Endothelial cell of umbilical vein (primary cell): ENCODE measurements at regions of chr1 and their contacts with region 1.

Region 1: GRCh38 chr1:151254217-151255213 is at the start of gene PSMD4:
- DNase-seq: peak; percentile 98
- H3K4me3 ChIP-seq: peak within 1 kb of the TSS; percentile 82 to 96 (median 87)
- H3K27ac ChIP-seq: peak within 1 kb of the TSS; percentile 80
- H3K4me1 ChIP-seq: peaks cover 7% of the 10 kb centered on the region
- H3K27me3 ChIP-seq: no peaks in the 10 kb centered on the region
- CTCF ChIP-seq: no peak
- POLR2A ChIP-seq: peak; percentile 96
- total RNA-seq, gene PSMD4: 181 and 184 TPM in 2 replicates

Region 2: GRCh38 chr1:151189638-151190445 is 64.7 kb before region 1 on chr1 and contains the start of gene VPS72:
- CTCF ChIA-PET with region 1: interaction called, 45 read pairs
- POLR2A ChIA-PET with region 1: no interaction called
- dilution Hi-C with region 1: no loop called
- intact Hi-C with region 1: no loop called
- DNase-seq: peak; percentile 91
- H3K4me3 ChIP-seq: peak within 1 kb of the TSS; percentile 63 to 97 (median 93)
- H3K27ac ChIP-seq: peak within 1 kb of the TSS; percentile 56
- H3K4me1 ChIP-seq: peaks cover 10% of the 10 kb centered on the region
- H3K27me3 ChIP-seq: no peaks in the 10 kb centered on the region
- CTCF ChIP-seq: no peak
- POLR2A ChIP-seq: peak; percentile 92
- total RNA-seq, gene VPS72: 83.1 and 85.2 TPM in 2 replicates

Region 3: DNA sequence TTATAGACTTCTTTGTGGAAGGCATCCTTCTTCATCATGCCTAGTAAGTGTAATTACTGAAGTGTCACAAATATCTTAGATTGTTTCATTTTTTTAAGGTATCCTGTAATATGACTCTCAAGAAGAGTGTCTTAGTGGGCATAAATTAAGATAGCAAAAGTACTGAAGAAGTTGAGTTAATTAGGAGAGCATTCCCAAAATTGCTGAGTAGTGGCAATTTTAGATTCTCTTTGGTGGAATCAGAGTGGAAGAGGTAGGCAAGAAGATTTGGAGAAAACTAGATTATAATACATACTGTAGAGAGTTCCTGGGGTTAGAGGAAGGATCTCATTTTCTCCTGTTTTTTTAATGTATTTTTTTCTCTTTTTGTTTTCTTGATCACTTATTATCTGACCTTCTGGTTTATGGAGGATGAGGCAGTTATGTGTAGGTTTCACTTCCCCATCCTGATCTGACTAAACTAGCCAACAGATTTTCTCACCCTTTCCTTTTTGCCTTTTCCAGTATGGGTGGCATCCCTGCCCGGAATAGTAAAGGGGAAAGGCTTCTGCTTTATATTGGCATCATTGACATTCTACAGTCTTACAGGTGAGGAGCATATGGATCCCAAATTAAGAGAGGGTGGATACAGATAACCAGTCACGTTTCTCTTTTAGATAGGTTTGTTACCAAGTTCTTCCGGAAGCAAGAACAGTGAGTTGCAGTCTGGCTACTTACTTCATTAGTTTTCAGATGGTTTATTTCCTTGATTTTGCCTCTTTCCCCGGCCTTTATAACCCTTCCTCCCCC is 16.6 kb before region 1 on chr1:
- CTCF ChIA-PET with region 1: interaction called, 17 read pairs
- POLR2A ChIA-PET with region 1: no interaction called
- dilution Hi-C with region 1: no loop called
- intact Hi-C with region 1: no loop called
- DNase-seq: peak; percentile 10
- H3K4me3 ChIP-seq: no peak overlapping the region
- H3K27ac ChIP-seq: no peak overlapping the region
- H3K4me1 ChIP-seq: no peaks in the 10 kb centered on the region
- H3K27me3 ChIP-seq: no peaks in the 10 kb centered on the region
- CTCF ChIP-seq: no peak
- POLR2A ChIP-seq: no peak

Region 4: GRCh38 chr1:151243683-151244216 is 10.8 kb before region 1 on chr1:
- CTCF ChIA-PET with region 1: interaction called, 10 read pairs
- POLR2A ChIA-PET with region 1: no interaction called
- dilution Hi-C with region 1: no loop called
- intact Hi-C with region 1: no loop called
- DNase-seq: no peak
- H3K4me3 ChIP-seq: no peak overlapping the region
- H3K27ac ChIP-seq: no peak overlapping the region
- H3K4me1 ChIP-seq: no peaks in the 10 kb centered on the region
- H3K27me3 ChIP-seq: no peaks in the 10 kb centered on the region
- CTCF ChIP-seq: no peak
- POLR2A ChIP-seq: no peak

Region 5: DNA sequence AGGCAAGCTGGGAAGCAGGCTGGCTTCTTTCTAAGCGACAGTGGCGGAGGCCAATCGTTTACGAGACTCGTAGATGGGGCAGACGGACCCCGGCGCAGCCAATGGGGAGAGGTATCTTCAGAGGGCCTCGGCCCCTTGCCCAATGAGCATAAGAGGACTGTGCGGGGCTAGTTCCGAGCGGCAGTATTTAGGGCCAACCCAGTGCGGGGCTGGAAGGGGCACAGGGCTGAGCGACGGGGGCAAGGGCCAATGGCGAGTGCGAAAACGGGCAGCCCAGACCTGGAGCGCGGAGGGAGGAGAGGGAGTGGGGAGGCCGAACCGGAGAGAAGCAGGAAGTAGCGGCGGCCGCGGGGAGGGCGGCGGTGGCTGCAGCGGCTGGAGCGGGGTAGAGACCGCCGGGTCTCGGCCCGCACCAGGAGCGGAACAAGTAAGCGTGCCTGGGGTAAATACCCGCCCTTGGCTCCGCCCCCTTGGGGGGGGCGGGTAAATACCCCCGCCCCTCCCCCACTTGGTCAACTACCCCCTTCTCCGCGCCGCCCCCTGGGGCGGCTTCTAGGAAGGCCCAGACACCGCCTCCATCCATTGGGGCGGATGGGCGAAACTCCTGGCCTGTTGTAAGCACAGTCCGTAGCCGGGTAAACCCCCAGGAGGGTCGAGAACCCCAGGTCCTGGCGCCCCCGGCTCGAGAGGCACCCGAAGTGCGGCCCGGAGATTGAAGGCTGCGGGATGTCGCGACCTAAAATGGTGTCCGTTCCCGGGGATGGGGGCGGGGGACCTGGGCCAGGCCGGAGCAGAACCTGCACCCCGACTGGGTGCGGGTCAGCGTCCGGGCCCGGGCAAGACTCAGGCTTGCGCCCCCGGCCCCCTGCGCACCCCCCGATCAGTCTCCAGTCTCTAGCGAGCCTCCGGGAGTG is 27.7 kb after region 1 on chr1 and contains the start of gene ZNF687:
- CTCF ChIA-PET with region 1: interaction called, 7 read pairs
- POLR2A ChIA-PET with region 1: interaction called, 8 read pairs
- dilution Hi-C with region 1: no loop called
- intact Hi-C with region 1: loop called (anchors 1 kb)
- DNase-seq: peak; percentile 100
- H3K4me3 ChIP-seq: peak within 1 kb of the TSS; percentile 66 to 89 (median 69)
- H3K27ac ChIP-seq: peak within 1 kb of the TSS; percentile 81
- H3K4me1 ChIP-seq: peaks cover 9% of the 10 kb centered on the region
- H3K27me3 ChIP-seq: peaks cover 0 to 2% of the 10 kb centered on the region in 2 experiments
- CTCF ChIP-seq: no peak
- POLR2A ChIP-seq: peak; percentile 76
- total RNA-seq, gene ZNF687: 15.5 and 17.9 TPM in 2 replicates